ENCODE measurements at regions of chr6 and their contacts with region 1.

Region 1: DNA sequence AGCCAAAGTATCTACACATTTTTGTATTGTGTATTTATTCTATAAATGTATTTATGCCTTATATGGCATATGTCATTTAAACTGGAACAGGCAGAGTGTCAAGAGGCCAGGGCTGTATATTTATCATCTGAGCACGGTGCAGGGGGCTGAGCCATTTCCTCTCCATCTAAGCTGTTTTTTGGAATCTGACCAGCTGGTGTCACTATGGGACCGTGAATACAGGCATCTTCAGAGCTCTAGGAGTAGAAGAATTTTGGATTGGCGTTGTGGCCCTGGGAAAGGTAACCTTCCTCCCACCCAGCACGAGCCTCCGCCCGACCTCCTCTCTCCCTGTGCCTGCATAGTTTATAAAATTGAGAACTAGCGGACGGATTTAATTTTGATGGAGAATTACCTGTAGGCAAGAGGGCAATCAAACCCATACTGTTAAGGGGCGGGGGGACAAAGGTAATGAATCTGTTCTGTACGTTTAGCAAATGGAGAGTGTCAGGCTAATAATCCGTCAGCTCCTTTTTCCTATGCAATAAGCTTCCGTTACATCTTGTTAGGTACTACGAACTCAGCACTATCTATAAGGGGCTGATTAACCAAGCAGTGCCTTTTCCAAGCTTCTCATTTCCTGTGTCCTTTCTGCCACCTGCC is 29.0 kb upstream of the EEF1E1 start:
- DNase-seq: peak in 1 of 2 donors; percentile 42
- ATAC-seq: peak; percentile 87

Region 2: DNA sequence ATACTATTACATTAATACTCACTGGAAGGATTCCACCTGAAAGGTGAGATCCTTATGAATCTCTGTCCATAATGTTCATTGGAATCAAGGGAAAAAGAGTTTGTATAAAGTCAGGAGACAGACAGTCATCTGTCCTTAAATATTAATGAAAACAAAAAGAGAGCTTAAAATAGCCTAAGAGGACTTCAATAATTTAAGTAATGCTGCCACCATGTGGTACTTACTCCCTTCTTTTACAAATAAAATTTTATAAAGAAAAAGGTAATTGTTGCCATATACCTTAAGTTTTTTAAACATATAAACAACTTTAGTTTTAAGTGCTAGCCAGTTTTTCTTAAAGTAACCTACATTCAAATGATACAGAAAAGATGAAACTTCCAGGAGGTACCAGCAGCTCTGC is 72.2 kb before region 1 on chr6:
- intact Hi-C with region 1: no loop called
- DNase-seq: no peak
- ATAC-seq: no peak

Region 3: DNA sequence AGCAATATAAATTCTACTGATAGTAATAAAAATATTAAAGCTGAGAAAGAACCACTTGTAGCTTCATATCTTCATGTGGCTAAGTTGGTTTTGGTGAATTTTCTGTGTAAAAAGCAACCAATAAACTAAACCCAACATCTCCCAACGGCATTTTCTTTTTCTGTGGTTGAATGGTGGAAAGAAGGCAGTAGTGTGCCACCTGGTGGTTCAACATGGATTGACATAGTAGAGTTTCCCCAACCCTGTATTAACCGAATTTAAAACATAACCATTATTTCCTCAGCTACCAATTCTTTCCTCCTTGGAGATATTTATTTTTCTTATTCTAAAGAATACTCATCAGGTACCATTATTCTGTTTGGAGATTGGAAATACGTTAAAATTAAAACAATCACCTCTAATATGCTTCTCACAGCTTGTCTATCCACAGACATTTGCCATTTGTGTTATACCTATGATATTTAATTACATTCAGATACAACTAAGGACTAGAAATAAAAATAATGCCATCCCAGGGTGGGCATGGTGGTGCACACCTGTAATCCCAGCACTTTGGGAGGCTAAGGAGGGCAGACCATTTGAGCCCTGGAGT is 88.1 kb after region 1 on chr6:
- intact Hi-C with region 1: loop called in 1 of 2 experiments (anchors 10 kb)
- DNase-seq: peak in 1 of 2 donors; percentile 38
- ATAC-seq: peak; percentile 59

Region 4: DNA sequence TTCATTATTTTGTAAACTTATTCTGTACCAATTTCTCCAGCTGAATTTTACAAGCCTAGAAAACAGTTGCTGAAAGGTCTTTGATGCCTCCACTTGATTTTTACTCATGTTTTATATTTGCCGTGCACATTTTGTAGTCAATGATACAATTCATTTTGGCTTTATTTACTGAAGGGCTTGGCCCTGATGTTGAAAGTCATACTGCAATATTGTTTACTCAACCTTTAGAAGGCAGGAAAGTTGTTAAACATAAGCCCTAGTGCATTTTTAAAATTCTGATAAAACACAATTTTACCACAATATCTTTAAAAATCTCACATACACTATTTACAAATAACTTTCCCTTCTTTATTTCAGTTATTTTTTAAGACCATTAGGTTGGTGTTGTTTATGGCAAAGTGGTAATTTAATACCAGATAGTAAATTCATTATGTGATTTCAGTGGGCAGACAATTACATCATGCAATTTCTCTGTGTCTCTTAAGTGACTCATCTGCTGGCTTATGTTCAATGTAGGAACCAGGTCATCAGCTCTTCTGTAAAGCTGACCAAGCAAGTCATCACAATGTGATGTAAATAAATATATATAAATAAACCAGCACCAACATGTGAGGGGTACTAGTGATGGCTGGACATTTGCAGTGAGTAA is 425.1 kb after region 1 on chr6:
- intact Hi-C with region 1: no loop called
- DNase-seq: no peak
- ATAC-seq: peak; percentile 66